GM12878 (cell line): ENCODE measurements at regions of chr1 and their contacts with region 1.

Region 1: GRCh38 chr1:56557746-56558145 is 21.6 kb downstream of the PLPP3 start:
- DNase-seq: no peak
- ATAC-seq: no peak
- H3K4me3 ChIP-seq: no peak overlapping the region
- H3K27ac ChIP-seq: no peak overlapping the region
- H3K4me1 ChIP-seq: no peaks in the 10 kb centered on the region
- H3K27me3 ChIP-seq: no peaks in the 10 kb centered on the region
- CTCF ChIP-seq: no peak
- EP300 ChIP-seq: no peak
- POLR2A ChIP-seq: no peak
- RAD21 ChIP-seq: no peak

Region 2: GRCh38 chr1:56222914-56223540 is 334.7 kb before region 1 on chr1:
- CTCF ChIA-PET with region 1: no interaction called
- POLR2A ChIA-PET with region 1: no interaction called
- RAD21 ChIA-PET with region 1: no interaction called
- SMC1A ChIA-PET with region 1: no interaction called
- in situ Hi-C with region 1: no loop called
- intact Hi-C with region 1: no loop called
- DNase-seq: no peak
- ATAC-seq: peak; percentile 93
- H3K4me3 ChIP-seq: no peak overlapping the region
- H3K27ac ChIP-seq: no peak overlapping the region
- H3K4me1 ChIP-seq: no peaks in the 10 kb centered on the region
- H3K27me3 ChIP-seq: no peaks in the 10 kb centered on the region
- CTCF ChIP-seq: no peak
- EP300 ChIP-seq: peak in 1 of 2 experiments; percentile 58; a peak in 1 of 4 replicates
- POLR2A ChIP-seq: no peak
- RAD21 ChIP-seq: no peak

Region 3: DNA sequence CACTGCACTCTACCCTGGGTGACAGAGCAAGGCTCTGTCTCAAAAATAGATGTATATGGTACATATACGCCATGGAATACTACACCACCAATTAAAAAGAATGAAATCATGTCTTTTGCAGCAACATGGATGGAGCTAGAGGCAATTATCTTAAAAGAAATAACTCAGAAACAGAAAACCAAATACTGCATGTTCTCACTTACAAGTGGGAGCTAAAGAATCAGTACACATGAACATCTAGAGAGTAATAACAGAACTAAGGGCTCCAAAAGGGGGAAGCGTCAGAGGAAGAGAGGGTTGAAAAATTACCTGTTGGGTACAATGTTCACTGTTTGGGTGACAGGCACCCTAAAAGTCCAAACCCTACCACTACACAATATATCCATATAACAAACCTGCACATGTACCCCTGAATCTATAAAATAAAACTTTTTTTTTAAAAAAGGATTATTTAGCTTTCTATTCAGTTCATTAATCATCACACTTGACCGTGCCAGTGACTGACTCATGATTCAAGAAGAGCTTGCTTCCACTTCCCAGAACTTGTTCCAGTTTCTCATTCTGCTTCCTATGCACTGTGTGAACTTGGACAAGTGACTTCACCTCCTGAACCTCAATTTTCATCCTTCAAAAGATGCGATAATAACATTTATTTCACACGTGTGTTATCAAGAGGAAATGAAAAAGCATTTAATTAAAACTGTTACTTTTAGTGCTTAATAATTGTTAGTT is 87.9 kb before region 1 on chr1:
- CTCF ChIA-PET with region 1: interaction called, 12 read pairs
- POLR2A ChIA-PET with region 1: interaction called, 23 read pairs
- RAD21 ChIA-PET with region 1: interaction called, 138 read pairs
- SMC1A ChIA-PET with region 1: interaction called, 54 read pairs
- in situ Hi-C with region 1: no loop called
- intact Hi-C with region 1: no loop called
- DNase-seq: no peak
- ATAC-seq: peak; percentile 58
- H3K4me3 ChIP-seq: no peak overlapping the region
- H3K27ac ChIP-seq: no peak overlapping the region
- H3K4me1 ChIP-seq: peaks cover 8% of the 10 kb centered on the region; the same call in 1 of the 2 replicates
- H3K27me3 ChIP-seq: no peaks in the 10 kb centered on the region
- CTCF ChIP-seq: no peak
- EP300 ChIP-seq: no peak
- POLR2A ChIP-seq: no peak
- RAD21 ChIP-seq: no peak

Region 4: GRCh38 chr1:56516539-56517252 is 41.0 kb before region 1 on chr1:
- CTCF ChIA-PET with region 1: no interaction called
- POLR2A ChIA-PET with region 1: interaction called, 3 read pairs
- RAD21 ChIA-PET with region 1: interaction called, 16 read pairs
- SMC1A ChIA-PET with region 1: interaction called, 10 read pairs
- in situ Hi-C with region 1: no loop called
- intact Hi-C with region 1: no loop called
- DNase-seq: peak; percentile 43
- ATAC-seq: peak; percentile 96
- H3K4me3 ChIP-seq: peak overlapping the region; percentile 14; the same call in 1 of the 2 replicates
- H3K27ac ChIP-seq: peak overlapping the region; percentile 45; the same call in 1 of the 2 replicates
- H3K4me1 ChIP-seq: peaks cover 32% of the 10 kb centered on the region
- H3K27me3 ChIP-seq: no peaks in the 10 kb centered on the region; a peak in 2 of 4 replicates
- CTCF ChIP-seq: no peak
- EP300 ChIP-seq: peak in 1 of 2 experiments; percentile 10; a peak in 1 of 4 replicates
- POLR2A ChIP-seq: peak; percentile 34; the same call in 1 of the 2 replicates
- RAD21 ChIP-seq: no peak

Region 5: DNA sequence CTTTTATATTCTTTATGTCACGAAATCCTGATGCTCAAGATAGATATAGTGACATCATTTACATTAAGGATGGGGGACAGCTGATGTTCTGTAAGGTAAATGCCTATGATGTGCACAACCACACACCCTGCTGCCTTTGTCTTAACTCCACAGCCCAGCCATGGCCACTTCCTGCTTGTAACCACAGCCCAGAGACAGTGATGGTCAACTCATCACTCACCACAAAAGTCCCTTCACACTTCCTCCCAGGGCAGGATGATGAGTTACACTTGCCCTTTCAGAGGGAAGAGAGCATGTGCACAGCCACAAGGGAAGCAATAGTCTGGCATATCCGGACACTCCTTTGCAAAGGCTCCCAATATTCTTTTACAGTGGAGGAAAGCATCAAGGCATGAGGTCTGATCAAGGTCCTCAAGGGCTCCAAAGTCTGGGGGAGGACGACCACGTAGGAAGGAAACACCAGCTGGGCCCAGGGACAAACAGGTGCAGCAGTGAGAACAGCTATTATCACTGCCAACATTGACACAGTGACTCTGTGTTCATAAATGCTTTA is 32.2 kb before region 1 on chr1:
- CTCF ChIA-PET with region 1: interaction called, 27 read pairs
- POLR2A ChIA-PET with region 1: interaction called, 6 read pairs
- RAD21 ChIA-PET with region 1: interaction called, 74 read pairs
- SMC1A ChIA-PET with region 1: interaction called, 342 read pairs
- in situ Hi-C with region 1: no loop called
- intact Hi-C with region 1: no loop called
- DNase-seq: peak; percentile 79
- ATAC-seq: peak; percentile 90
- H3K4me3 ChIP-seq: no peak overlapping the region
- H3K27ac ChIP-seq: peak overlapping the region; percentile 53; the same call in 1 of the 2 replicates
- H3K4me1 ChIP-seq: peaks cover 42% of the 10 kb centered on the region
- H3K27me3 ChIP-seq: no peaks in the 10 kb centered on the region
- CTCF ChIP-seq: no peak
- EP300 ChIP-seq: peak; percentile 79 to 92
- POLR2A ChIP-seq: no peak
- RAD21 ChIP-seq: no peak

Region 6: DNA sequence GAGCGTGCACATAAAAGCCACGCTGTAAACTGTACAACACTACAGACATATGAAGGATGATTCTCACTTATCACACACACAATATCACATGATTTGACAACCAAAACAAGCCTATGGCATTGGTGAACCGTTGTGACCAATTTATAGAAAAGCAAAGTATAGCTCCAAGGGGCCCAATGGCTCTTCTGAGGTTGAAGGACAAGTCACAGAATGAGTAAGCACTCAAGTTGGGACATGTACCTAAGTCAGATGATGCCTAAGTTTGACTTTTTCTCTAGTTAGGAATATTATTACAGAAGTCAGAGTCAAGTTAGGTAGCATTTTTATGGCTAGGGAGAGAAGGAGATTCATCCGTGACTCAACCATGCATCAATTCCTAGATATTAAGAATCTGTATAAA is 24.1 kb before region 1 on chr1:
- CTCF ChIA-PET with region 1: interaction called, 3 read pairs
- POLR2A ChIA-PET with region 1: interaction called, 6 read pairs
- RAD21 ChIA-PET with region 1: interaction called, 74 read pairs
- SMC1A ChIA-PET with region 1: interaction called, 342 read pairs
- in situ Hi-C with region 1: no loop called
- intact Hi-C with region 1: no loop called
- DNase-seq: no peak
- ATAC-seq: peak; percentile 82
- H3K4me3 ChIP-seq: no peak overlapping the region
- H3K27ac ChIP-seq: no peak overlapping the region
- H3K4me1 ChIP-seq: peaks cover 2% of the 10 kb centered on the region; the same call in 1 of the 2 replicates
- H3K27me3 ChIP-seq: no peaks in the 10 kb centered on the region
- CTCF ChIP-seq: no peak
- EP300 ChIP-seq: no peak
- POLR2A ChIP-seq: no peak
- RAD21 ChIP-seq: no peak

Region 7: DNA sequence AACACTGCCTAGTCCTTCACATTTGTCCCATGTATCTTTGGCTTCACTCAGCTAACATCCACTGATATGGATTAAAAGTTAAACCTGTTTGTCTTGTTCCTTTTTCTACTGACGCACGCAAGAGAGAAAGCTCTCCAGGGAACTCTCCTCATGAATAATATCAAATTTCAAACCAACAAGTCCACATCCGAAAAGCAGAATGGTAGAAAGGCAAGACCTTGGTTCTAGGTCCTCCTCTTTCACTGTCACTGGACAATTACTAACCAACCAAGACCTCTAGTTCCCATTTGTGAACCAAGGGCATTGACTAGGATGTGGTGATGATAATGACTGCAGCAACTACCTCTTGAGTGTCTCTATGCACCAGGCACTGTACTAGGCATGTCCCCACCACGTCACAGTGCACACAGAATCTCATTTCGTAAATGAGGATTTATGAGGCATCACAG is 13.2 kb after region 1 on chr1:
- CTCF ChIA-PET with region 1: interaction called, 253 read pairs
- POLR2A ChIA-PET with region 1: interaction called, 195 read pairs
- RAD21 ChIA-PET with region 1: interaction called, 381 read pairs
- SMC1A ChIA-PET with region 1: interaction called, 439 read pairs
- in situ Hi-C with region 1: no loop called
- intact Hi-C with region 1: no loop called
- DNase-seq: no peak
- ATAC-seq: peak; percentile 33
- H3K4me3 ChIP-seq: no peak overlapping the region
- H3K27ac ChIP-seq: no peak overlapping the region
- H3K4me1 ChIP-seq: no peaks in the 10 kb centered on the region
- H3K27me3 ChIP-seq: peaks cover 0 to 3% of the 10 kb centered on the region in 2 experiments; a peak in 1 of 4 replicates
- CTCF ChIP-seq: no peak
- EP300 ChIP-seq: no peak
- POLR2A ChIP-seq: no peak
- RAD21 ChIP-seq: no peak